ENCODE measurements at regions of chr2 and their contacts with region 1.

Region 1: DNA sequence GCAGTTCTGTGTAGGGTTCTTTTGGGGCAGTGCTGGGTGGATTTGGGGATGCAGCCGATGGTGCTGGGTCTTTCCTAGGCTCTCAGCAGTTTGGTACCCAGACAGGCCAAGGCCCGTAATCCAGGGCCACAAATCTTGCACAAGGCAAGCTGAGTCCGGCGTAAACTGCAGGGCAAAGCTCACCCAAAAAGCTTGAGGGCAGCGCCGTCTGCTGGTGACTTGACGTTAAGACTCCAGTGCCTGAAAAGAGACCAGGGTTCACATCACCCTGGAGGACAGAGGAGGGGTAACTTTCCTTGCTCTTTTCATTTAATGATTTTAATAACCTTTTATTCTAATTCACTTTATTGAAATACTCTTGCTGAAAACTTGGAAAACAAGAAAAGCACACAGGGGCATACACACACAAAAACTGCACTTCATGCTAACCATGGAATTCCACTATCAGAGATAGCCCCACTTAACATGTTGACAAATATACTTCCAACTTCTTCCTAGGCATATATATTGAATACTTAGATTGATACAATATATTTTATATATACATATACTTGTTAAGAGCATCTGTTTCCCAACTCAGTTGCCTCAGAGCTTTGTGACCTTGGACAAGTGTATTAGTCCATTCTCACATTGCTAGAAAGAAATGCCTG is 38.9 kb downstream of the CNGA3 start:
- ATAC-seq: peak; percentile 90 to 100 (median 94)
- H3K4me3 ChIP-seq: no peak overlapping the region
- H3K27ac ChIP-seq: no peak overlapping the region
- H3K4me1 ChIP-seq: peaks cover 2 to 10% of the 10 kb centered on the region in 2 donors

Region 2: DNA sequence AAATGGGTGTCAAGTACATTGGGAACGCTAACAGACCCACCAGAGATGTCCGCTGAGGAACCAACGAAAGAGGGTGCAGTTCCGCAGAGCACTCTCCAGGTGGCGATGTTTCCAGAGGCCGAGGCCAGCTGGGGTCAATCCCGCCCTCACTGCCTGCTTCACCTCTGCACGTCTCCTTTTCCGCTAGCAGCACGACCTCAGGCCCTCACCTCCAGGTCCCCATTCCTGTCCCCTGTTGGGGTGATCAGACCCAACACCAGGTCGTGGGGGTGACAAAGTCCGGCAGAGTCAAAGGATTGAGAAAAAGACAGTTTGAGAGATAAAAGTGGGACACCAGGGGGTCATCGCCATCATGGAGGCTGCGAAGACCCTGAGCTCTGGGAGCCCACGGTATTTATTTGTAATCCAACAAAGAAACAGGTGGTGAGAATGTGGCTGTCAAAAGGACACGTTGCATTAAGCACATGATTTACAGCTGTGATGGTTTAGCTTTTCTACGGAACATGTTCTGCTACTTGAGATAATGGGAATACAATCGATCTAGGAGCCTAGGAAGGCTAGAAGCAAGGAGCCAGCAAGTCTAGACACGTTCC is 644.5 kb before region 1 on chr2:
- in situ Hi-C with region 1: loop called in 1 of 9 experiments (anchors 25 kb)
- ATAC-seq: peak; percentile 18 to 61 (median 46)
- H3K4me3 ChIP-seq: no peak overlapping the region
- H3K27ac ChIP-seq: peak overlapping the region in 1 of 2 donors; percentile 65
- H3K4me1 ChIP-seq: peaks cover 0 to 6% of the 10 kb centered on the region in 2 donors

Region 3: DNA sequence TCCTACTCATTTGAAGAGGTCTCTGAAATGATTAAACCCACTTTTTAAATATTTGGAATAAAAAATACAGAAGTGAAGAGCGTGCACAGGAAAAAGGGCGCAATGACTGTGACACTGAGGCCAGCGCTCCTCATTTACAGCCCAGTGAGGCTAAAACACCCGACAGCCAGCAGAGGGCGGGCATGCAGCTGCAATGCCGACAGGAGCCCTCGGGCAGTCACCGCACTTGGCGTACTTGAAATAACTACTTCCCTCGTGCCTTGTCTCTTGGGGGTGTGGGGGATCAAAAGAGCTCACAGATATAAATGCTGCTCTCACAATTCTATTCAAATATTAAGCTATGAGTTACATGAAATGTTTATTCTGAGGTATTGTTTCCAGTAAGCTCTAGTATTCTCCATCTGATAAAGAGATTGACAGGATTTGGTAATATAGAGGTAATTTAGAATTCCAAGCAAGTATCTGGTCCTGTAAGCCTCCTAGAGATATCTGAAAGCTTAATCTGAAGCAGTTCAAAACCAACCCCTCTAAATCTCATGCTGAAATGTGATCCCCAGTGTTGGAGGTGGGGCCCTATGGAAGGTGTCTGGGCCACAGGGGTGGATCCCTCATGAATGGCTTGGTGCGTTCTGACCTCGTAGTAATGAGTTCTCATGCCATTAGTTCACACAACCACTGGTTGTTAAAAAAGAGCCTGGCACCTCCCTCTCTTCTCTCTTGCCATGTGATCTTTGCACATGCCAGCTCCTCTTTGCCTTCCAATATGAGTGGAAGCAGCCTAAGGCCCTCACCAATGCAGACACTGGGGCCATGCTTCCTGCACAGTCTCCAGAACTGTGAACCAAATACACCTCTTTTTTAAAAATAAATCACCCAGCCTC is 578.2 kb before region 1 on chr2:
- in situ Hi-C with region 1: loop called in 7 of 9 experiments (anchors 10 to 25 kb)
- ATAC-seq: peak; percentile 85 to 97 (median 92)
- H3K4me3 ChIP-seq: no peak overlapping the region
- H3K27ac ChIP-seq: no peak overlapping the region
- H3K4me1 ChIP-seq: no peaks in the 10 kb centered on the region

Region 4: GRCh38 chr2:98012561-98012991 is 372.6 kb before region 1 on chr2:
- in situ Hi-C with region 1: loop called in 1 of 9 experiments (anchors 25 kb)
- ATAC-seq: no peak
- H3K4me3 ChIP-seq: no peak overlapping the region
- H3K27ac ChIP-seq: no peak overlapping the region
- H3K4me1 ChIP-seq: no peaks in the 10 kb centered on the region

Measured in motor neuron (in vitro differentiated cells).